ENCODE measurements at regions of chr17 and their contacts with region 1.

Region 1: DNA sequence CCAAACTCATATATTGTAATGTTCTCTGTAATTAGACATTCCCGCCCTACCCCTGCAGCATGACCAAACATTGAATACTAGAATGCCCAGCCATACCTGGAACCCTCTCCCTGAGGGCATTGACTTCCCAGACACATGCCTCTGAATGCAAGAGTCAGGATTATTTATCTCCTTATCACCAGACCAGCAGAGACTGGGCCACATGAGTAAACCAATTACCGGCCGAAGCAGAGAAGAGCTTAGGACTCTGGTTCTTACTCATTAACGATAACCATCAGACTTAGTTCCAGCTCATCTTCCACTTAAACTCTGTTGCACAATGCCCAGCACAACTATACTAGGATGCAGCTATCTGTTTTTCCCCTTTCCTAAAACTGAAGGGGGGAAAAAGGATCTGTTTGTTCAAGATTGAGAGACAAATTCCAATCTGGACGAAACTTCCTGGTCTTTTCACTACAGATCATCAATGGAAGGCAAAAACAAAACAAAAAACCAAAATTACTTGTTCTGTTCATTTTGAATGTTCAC is 88.2 kb upstream of the CORO6 start:
- DNase-seq: peak; percentile 68 to 78
- H3K4me3 ChIP-seq: no peak overlapping the region
- H3K4me3 Mint-ChIP-seq: no peak overlapping the region
- H3K27ac Mint-ChIP-seq: peak overlapping the region; percentile 35
- H3K4me1 ChIP-seq: peaks cover 39% of the 10 kb centered on the region
- H3K4me1 Mint-ChIP-seq: peaks cover 28% of the 10 kb centered on the region
- H3K27me3 ChIP-seq: no peaks in the 10 kb centered on the region
- H3K27me3 Mint-ChIP-seq: no peaks in the 10 kb centered on the region
- CTCF ChIP-seq: no peak

Region 2: GRCh38 chr17:29699283-29699682 is 11.7 kb before region 1 on chr17:
- CTCF ChIA-PET with region 1: no interaction called
- POLR2A ChIA-PET with region 1: interaction called, 10 read pairs
- intact Hi-C with region 1: no loop called
- DNase-seq: no peak
- H3K4me3 ChIP-seq: no peak overlapping the region
- H3K4me3 Mint-ChIP-seq: no peak overlapping the region
- H3K27ac Mint-ChIP-seq: no peak overlapping the region
- H3K4me1 ChIP-seq: no peaks in the 10 kb centered on the region
- H3K4me1 Mint-ChIP-seq: no peaks in the 10 kb centered on the region
- H3K27me3 ChIP-seq: no peaks in the 10 kb centered on the region
- H3K27me3 Mint-ChIP-seq: no peaks in the 10 kb centered on the region
- CTCF ChIP-seq: no peak

Region 3: GRCh38 chr17:29722411-29723198 is 11.7 kb after region 1 on chr17:
- CTCF ChIA-PET with region 1: interaction called, 7 read pairs
- POLR2A ChIA-PET with region 1: no interaction called
- intact Hi-C with region 1: loop called (anchors 2 kb)
- DNase-seq: peak in 1 of 2 experiments; percentile 32
- H3K4me3 ChIP-seq: no peak overlapping the region
- H3K4me3 Mint-ChIP-seq: no peak overlapping the region
- H3K27ac Mint-ChIP-seq: peak overlapping the region; percentile 37
- H3K4me1 ChIP-seq: peaks cover 50% of the 10 kb centered on the region
- H3K4me1 Mint-ChIP-seq: peaks cover 46% of the 10 kb centered on the region
- H3K27me3 ChIP-seq: no peaks in the 10 kb centered on the region
- H3K27me3 Mint-ChIP-seq: no peaks in the 10 kb centered on the region
- CTCF ChIP-seq: no peak

Region 4: GRCh38 chr17:29825604-29826003 is 114.6 kb after region 1 on chr17:
- CTCF ChIA-PET with region 1: no interaction called
- POLR2A ChIA-PET with region 1: no interaction called
- intact Hi-C with region 1: no loop called
- DNase-seq: peak in 1 of 2 experiments; percentile 43
- H3K4me3 ChIP-seq: no peak overlapping the region
- H3K4me3 Mint-ChIP-seq: no peak overlapping the region
- H3K27ac Mint-ChIP-seq: no peak overlapping the region
- H3K4me1 ChIP-seq: peaks cover 19% of the 10 kb centered on the region
- H3K4me1 Mint-ChIP-seq: peaks cover 8% of the 10 kb centered on the region
- H3K27me3 ChIP-seq: no peaks in the 10 kb centered on the region
- H3K27me3 Mint-ChIP-seq: no peaks in the 10 kb centered on the region
- CTCF ChIP-seq: no peak